ENCODE measurements at regions of chr11 and their contacts with region 1.

Region 1: DNA sequence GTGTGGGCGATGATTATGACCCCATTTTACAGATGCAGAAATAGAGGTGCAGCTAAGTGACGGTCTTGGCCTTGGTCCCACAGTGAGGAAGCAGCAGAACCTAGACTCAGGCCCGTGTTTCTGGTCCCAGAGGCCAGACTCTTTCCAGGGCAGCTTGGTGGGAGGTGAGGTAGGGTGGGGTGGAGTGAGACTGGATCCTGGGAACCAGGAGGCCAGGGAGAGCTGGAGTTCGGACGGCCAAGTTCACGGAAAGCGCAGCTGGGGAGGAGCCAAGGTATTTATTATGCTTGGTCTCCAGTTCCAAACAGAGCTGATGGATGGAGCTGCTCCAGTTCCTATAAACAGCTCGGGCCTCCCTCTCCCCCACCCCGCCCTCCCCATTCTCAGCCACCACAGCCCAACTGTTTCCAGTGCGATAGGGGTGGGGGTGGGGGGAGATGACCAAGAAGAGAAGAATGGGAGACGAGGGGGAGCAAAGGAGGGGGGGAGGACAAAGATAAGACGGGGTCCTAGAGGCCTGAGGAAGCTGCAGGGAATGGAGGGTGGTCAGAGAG is 16.2 kb downstream of the LRRC32 start:
- DNase-seq: peak in 4 of 5 donors; percentile 72 to 87 (median 80)
- ATAC-seq: peak; percentile 49 to 71 (median 64)
- H3K4me3 ChIP-seq: no peak overlapping the region
- H3K27ac ChIP-seq: peak overlapping the region; percentile 45 to 88 (median 72)
- H3K4me1 ChIP-seq: peaks cover 4 to 77% (median 39%) of the 10 kb centered on the region in 12 donors
- H3K27me3 ChIP-seq: no peaks in the 10 kb centered on the region
- CTCF ChIP-seq: no peak
- POLR2A ChIP-seq: no peak

Region 2: GRCh38 chr11:76598426-76598839 is 55.9 kb before region 1 on chr11:
- intact Hi-C with region 1: loop called in 1 of 10 experiments (anchors 5 kb)
- DNase-seq: peak in 1 of 5 donors; percentile 59
- ATAC-seq: peak; percentile 58 to 69 (median 61)
- H3K4me3 ChIP-seq: no peak overlapping the region
- H3K27ac ChIP-seq: peak overlapping the region in 5 of 12 donors; percentile 1 to 25 (median 6)
- H3K4me1 ChIP-seq: peaks cover 0 to 31% (median 17%) of the 10 kb centered on the region in 12 donors
- H3K27me3 ChIP-seq: no peaks in the 10 kb centered on the region
- CTCF ChIP-seq: peak; percentile 43 to 74 (median 58)
- POLR2A ChIP-seq: no peak

Region 3: GRCh38 chr11:77027270-77027669 is 372.9 kb after region 1 on chr11:
- intact Hi-C with region 1: no loop called
- DNase-seq: no peak
- ATAC-seq: no peak
- H3K4me3 ChIP-seq: no peak overlapping the region
- H3K27ac ChIP-seq: peak overlapping the region in 4 of 12 donors; percentile 5 to 31 (median 16)
- H3K4me1 ChIP-seq: peaks cover 0 to 9% (median 0%) of the 10 kb centered on the region in 12 donors
- H3K27me3 ChIP-seq: peaks cover 0 to 20% (median 0%) of the 10 kb centered on the region in 9 donors
- CTCF ChIP-seq: no peak
- POLR2A ChIP-seq: no peak

Measured in heart left ventricle (tissue), 16 donors.